ENCODE measurements at regions of chr1 and their contacts with region 1.

Region 1: GRCh38 chr1:43946236-43947060 is at the start of gene IPO13:
- DNase-seq: peak; percentile 95 to 97
- ATAC-seq: peak; percentile 80
- H3K4me3 ChIP-seq: peak within 1 kb of the TSS; percentile 73 to 85 (median 80)
- H3K27ac ChIP-seq: peak within 1 kb of the TSS; percentile 90 to 97 (median 94)
- H3K4me1 ChIP-seq: peaks cover 52 to 55% of the 10 kb centered on the region in 2 donors
- H3K27me3 ChIP-seq: no peaks in the 10 kb centered on the region
- CTCF ChIP-seq: peak; percentile 67 to 88 (median 85)
- POLR2A ChIP-seq: peak; percentile 90 to 96
- total RNA-seq, gene IPO13: 81.9 to 171 (median 105) TPM

Region 2: GRCh38 chr1:43706598-43707495 is 239.6 kb before region 1 on chr1:
- in situ Hi-C with region 1: no loop called
- intact Hi-C with region 1: loop called (anchors 5 kb)
- DNase-seq: peak; percentile 93
- ATAC-seq: peak; percentile 31 to 89
- H3K4me3 ChIP-seq: peak overlapping the region; percentile 70 to 92 (median 86)
- H3K27ac ChIP-seq: peak overlapping the region; percentile 87 to 97 (median 89)
- H3K4me1 ChIP-seq: peaks cover 26 to 29% of the 10 kb centered on the region in 2 donors
- H3K27me3 ChIP-seq: no peaks in the 10 kb centered on the region
- CTCF ChIP-seq: no peak
- POLR2A ChIP-seq: peak in 1 of 2 donors; percentile 86

Region 3: DNA sequence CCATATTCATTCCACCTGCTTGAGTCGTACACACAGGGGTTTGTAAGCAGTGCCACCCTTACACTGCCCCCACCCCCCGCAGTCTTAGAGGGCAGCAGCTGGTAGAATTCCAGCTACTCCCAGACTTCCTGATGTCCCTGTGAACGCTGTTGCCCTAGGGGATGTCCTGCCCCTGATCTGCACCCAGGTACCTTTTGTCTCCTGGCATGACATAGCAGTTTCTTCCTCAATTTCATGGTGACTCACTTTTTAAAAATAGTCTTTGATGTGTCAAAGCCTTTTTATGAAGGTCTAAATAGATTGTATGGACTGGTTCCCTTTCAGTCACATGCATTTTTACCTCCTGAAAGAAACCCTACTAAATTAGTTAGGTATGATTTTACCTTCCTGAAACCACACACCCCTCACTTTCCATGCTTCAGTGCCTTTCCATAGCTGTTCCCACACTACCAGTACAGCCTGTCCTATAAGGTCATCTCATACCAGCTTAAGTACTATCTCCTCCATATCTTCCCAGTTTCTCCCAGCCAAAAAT is 162.7 kb before region 1 on chr1:
- in situ Hi-C with region 1: no loop called
- intact Hi-C with region 1: loop called (anchors 2 kb)
- DNase-seq: peak; percentile 50 to 75
- ATAC-seq: peak; percentile 88 to 93
- H3K4me3 ChIP-seq: no peak overlapping the region
- H3K27ac ChIP-seq: peak overlapping the region; percentile 82 to 88 (median 85)
- H3K4me1 ChIP-seq: peaks cover 38 to 50% of the 10 kb centered on the region in 2 donors
- H3K27me3 ChIP-seq: no peaks in the 10 kb centered on the region
- CTCF ChIP-seq: no peak
- POLR2A ChIP-seq: peak in 1 of 2 donors; percentile 9

Region 4: DNA sequence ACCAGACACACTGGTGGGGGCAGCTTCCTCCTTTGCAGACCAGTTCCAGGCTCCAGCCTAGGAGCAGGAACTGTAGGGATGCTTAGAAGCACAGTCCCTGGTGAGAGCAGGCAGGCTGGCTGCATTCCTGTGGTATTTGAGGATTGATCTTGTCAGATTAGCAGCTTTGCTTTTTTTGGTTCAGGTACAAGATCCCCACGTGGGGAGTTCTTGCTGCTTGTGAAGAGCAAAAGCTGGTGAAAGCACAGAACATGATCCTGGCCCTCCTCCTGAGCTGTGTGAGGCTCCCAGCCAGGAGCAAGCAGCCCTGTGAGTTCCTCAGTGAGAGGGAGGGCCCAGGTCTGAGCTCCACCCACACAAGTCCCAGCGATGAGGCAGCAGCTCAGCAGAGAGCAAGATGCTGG is 88.1 kb before region 1 on chr1:
- in situ Hi-C with region 1: no loop called
- intact Hi-C with region 1: loop called (anchors 5 kb)
- DNase-seq: peak; percentile 69 to 72
- ATAC-seq: peak; percentile 63 to 84
- H3K4me3 ChIP-seq: no peak overlapping the region
- H3K27ac ChIP-seq: peak overlapping the region; percentile 51 to 71 (median 56)
- H3K4me1 ChIP-seq: peaks cover 15 to 32% of the 10 kb centered on the region in 2 donors
- H3K27me3 ChIP-seq: no peaks in the 10 kb centered on the region
- CTCF ChIP-seq: no peak
- POLR2A ChIP-seq: no peak

Region 5: DNA sequence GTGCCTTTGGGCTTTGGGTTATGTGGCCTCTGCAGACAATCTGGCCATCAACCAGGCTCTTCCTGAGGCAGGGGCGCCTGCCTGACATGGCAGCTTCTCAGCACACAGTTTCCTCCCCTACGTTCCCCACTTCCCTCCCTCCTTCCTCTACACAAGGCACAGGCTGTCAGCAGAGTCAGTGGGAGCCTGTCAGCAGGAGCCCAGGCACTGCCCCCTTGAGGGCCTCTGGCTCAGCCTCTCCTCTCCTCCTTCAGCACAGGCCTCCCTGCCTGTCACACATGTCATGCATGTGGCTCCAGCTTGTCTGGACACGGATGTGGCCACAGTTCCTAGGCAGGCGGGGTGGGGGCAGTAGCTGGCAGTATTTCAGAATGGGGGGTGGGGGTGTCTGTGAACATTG is 65.0 kb before region 1 on chr1:
- in situ Hi-C with region 1: no loop called
- intact Hi-C with region 1: loop called (anchors 2 kb)
- DNase-seq: no peak
- ATAC-seq: no peak
- H3K4me3 ChIP-seq: no peak overlapping the region
- H3K27ac ChIP-seq: peak overlapping the region; percentile 52 to 77 (median 72)
- H3K4me1 ChIP-seq: peaks cover 30 to 37% of the 10 kb centered on the region in 2 donors
- H3K27me3 ChIP-seq: no peaks in the 10 kb centered on the region
- CTCF ChIP-seq: no peak
- POLR2A ChIP-seq: no peak

Region 6: GRCh38 chr1:43974443-43975248 is 28.2 kb after region 1 on chr1 and contains the start of gene ATP6V0B:
- in situ Hi-C with region 1: no loop called
- intact Hi-C with region 1: loop called (anchors 1 kb)
- DNase-seq: peak; percentile 95 to 96
- ATAC-seq: peak; percentile 75 to 78
- H3K4me3 ChIP-seq: peak within 1 kb of the TSS; percentile 84 to 100 (median 96)
- H3K27ac ChIP-seq: peak within 1 kb of the TSS; percentile 94 to 98 (median 97)
- H3K4me1 ChIP-seq: peaks cover 38 to 66% of the 10 kb centered on the region in 2 donors
- H3K27me3 ChIP-seq: no peaks in the 10 kb centered on the region
- CTCF ChIP-seq: peak; percentile 17 to 60 (median 37)
- POLR2A ChIP-seq: peak; percentile 95 to 98
- total RNA-seq, gene ATP6V0B: 156 to 242 (median 195) TPM